Dorsolateral prefrontal cortex (tissue), 120 donors: ENCODE measurements at regions of chr9 and their contacts with region 1.

Region 1: GRCh38 chr9:6584881-6585597 is 60.5 kb downstream of the GLDC start:
- DNase-seq: no peak
- H3K4me3 ChIP-seq: no peak overlapping the region
- H3K27ac ChIP-seq: no peak overlapping the region
- H3K27me3 ChIP-seq: no peaks in the 10 kb centered on the region
- CTCF ChIP-seq: peak; percentile 47 to 83 (median 65)

Region 2: GRCh38 chr9:6667633-6668280 is 82.7 kb after region 1 on chr9:
- intact Hi-C with region 1: loop called (anchors 1 to 5 kb)
- DNase-seq: no peak
- H3K4me3 ChIP-seq: peak overlapping the region in 1 of 59 donors; percentile 16
- H3K27ac ChIP-seq: no peak overlapping the region
- H3K27me3 ChIP-seq: no peaks in the 10 kb centered on the region
- CTCF ChIP-seq: peak; percentile 40 to 79 (median 68)

Region 3: DNA sequence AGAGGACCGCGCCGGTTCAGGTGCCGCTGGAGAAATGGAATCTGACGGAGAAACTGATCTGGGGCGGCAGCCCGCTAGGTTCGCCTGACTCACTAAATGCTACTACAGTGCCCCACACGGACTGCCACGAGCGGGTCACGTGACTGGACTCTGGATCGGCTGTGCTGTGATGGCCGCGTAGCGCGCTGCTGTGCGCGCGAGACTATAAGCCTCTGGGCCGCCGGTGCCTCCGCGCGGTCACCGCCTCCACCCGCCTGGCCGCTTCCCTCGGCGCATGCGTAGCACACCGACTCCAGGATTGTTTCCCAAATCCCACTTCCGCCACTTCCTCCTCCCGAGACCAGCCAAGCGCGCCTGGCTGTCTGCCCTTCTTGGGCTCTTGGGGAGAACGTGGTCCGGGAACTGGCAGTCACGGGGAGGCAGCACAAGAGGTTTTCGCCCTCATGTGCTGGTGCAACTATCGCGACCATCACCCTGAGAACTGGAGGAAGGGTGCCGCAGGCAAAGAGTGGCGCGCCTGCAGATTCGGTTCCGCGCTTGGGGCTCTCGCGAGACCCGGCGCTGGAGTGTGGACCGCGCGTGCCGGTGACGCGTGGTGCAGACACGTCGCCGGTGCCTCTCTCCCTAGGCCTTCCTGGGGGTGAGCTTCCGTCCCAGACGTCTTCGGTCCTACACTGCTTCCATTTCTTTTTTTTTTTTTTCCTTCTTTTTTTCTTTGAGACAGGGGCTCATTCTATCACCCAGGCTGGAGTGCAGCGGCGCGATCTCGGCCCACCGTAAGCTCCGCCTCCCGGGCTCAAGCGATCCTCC is 96.3 kb after region 1 on chr9:
- intact Hi-C with region 1: loop called in 1 of 2 experiments (anchors 5 kb)
- DNase-seq: peak; percentile 93 to 98 (median 95)
- H3K4me3 ChIP-seq: peak overlapping the region; percentile 51 to 95 (median 80)
- H3K27ac ChIP-seq: peak overlapping the region; percentile 92 to 100 (median 99)
- H3K27me3 ChIP-seq: no peaks in the 10 kb centered on the region
- CTCF ChIP-seq: peak in 35 of 56 donors; percentile 4 to 52 (median 22)

Region 4: GRCh38 chr9:6739218-6739617 is 154.2 kb after region 1 on chr9:
- intact Hi-C with region 1: loop called in 1 of 2 experiments (anchors 5 kb)
- DNase-seq: no peak
- H3K4me3 ChIP-seq: no peak overlapping the region
- H3K27ac ChIP-seq: no peak overlapping the region
- H3K27me3 ChIP-seq: no peaks in the 10 kb centered on the region
- CTCF ChIP-seq: peak in 43 of 56 donors; percentile 18 to 59 (median 37)